Right ventricle myocardium superior (tissue), 1 donor: ENCODE measurements at regions of chr1 and their contacts with region 1.

Region 1: GRCh38 chr1:119008483-119009311 is 20.6 kb upstream of the TBX15 start:
- DNase-seq: no peak
- ATAC-seq: peak; percentile 87

Region 2: GRCh38 chr1:118151312-118151937 is 857.3 kb before region 1 on chr1:
- intact Hi-C with region 1: loop called (anchors 5 kb)
- DNase-seq: peak; percentile 49
- ATAC-seq: no peak

Region 3: DNA sequence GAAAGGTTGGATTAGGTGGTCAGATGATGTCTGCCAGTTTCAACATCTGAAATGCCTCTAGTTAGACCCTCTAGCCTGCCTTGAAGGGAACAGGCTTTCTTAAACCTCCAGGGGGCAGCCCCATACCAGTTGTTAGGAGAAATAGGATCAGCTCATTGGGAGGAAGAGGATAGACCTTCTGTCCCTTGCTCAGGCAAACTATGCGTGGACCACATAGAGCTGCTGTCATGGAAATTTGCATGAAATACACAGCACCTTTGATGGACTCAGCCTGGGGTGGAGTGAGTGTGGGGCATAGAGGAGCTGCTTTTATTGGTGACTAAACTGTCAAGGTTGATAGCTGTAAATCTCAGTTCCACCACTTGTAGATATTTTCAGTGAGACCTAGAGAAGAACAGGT is 785.3 kb before region 1 on chr1:
- intact Hi-C with region 1: loop called (anchors 5 kb)
- DNase-seq: no peak
- ATAC-seq: peak; percentile 57